Heart left ventricle (tissue), 16 donors: ENCODE measurements at regions of chr3 and their contacts with region 1.

Region 1: DNA sequence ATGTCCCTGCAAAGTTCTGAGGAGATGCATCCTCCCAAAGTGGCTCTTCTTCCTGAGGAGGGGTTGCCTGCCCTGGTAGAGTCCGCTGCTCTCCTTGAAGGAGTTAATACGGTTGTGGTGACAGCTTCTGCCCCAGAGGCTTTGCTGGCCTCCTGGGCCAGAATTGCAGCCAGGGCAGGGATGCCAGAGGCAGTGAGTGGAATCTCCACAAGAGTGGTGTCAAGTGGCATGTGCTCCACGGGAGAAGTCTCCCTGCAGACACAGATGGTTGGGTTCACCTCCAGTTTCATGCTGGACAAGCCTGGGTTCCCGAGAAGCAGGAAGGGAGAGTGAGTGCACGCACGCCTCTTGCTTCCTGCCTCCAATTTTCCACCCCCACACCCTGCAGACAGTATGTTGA is 105.5 kb downstream of the SLC25A26 start:
- DNase-seq: peak in 1 of 5 donors; percentile 50
- ATAC-seq: peak in 3 of 4 donors; percentile 51 to 77 (median 77)
- H3K4me3 ChIP-seq: no peak overlapping the region
- H3K27ac ChIP-seq: no peak overlapping the region
- H3K4me1 ChIP-seq: peaks cover 0 to 19% (median 6%) of the 10 kb centered on the region in 12 donors
- H3K27me3 ChIP-seq: no peaks in the 10 kb centered on the region
- CTCF ChIP-seq: peak in 1 of 12 donors; percentile 10
- POLR2A ChIP-seq: no peak

Region 2: GRCh38 chr3:66372681-66373350 is 46.5 kb after region 1 on chr3:
- intact Hi-C with region 1: loop called in 1 of 10 experiments (anchors 5 kb)
- DNase-seq: peak; percentile 63 to 82 (median 67)
- ATAC-seq: peak; percentile 73 to 88 (median 76)
- H3K4me3 ChIP-seq: no peak overlapping the region
- H3K27ac ChIP-seq: peak overlapping the region in 10 of 12 donors; percentile 13 to 81 (median 57)
- H3K4me1 ChIP-seq: peaks cover 0 to 48% (median 15%) of the 10 kb centered on the region in 12 donors
- H3K27me3 ChIP-seq: no peaks in the 10 kb centered on the region
- CTCF ChIP-seq: peak; percentile 21 to 72 (median 55)
- POLR2A ChIP-seq: no peak